PC-3 (cell line): ENCODE measurements at regions of chr3 and their contacts with region 1.

Region 1: GRCh38 chr3:190048932-190049441 is 71.7 kb downstream of the P3H2 start:
- DNase-seq: peak; percentile 59
- ATAC-seq: peak; percentile 65
- H3K4me3 ChIP-seq: peak overlapping the region; percentile 10; the same call in 1 of the 2 replicates
- H3K27ac ChIP-seq: no peak overlapping the region
- H3K4me1 ChIP-seq: peaks cover 14% of the 10 kb centered on the region
- H3K27me3 ChIP-seq: no peaks in the 10 kb centered on the region
- CTCF ChIP-seq: no peak

Region 2: GRCh38 chr3:190038050-190038933 is 10.7 kb before region 1 on chr3:
- CTCF ChIA-PET with region 1: no interaction called
- POLR2A ChIA-PET with region 1: no interaction called
- intact Hi-C with region 1: no loop called
- DNase-seq: peak; percentile 72
- ATAC-seq: peak; percentile 76
- H3K4me3 ChIP-seq: no peak overlapping the region
- H3K27ac ChIP-seq: no peak overlapping the region
- H3K4me1 ChIP-seq: peaks cover 9% of the 10 kb centered on the region; the same call in 1 of the 2 replicates
- H3K27me3 ChIP-seq: no peaks in the 10 kb centered on the region
- CTCF ChIP-seq: no peak

Region 3: DNA sequence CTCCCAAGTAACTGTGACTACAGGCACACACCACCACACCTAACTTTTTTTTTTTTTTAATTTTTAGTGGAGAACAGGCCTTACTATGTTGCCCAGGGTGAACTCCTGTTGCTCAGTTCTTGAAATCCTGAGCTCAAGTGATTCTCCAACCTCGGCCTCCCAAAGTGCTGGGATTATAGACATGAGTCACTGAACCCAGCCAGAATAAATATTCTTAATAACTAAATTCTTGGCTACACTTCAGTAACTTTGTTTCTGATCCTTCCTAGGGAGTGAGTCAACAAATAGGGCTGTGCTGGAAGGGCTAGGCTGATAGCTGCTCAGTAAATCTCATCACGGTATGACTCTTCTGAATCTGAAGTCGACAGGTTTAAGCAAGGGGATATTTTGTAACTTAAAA is 15.1 kb after region 1 on chr3:
- CTCF ChIA-PET with region 1: interaction called, 3 read pairs
- POLR2A ChIA-PET with region 1: interaction called, 18 read pairs
- intact Hi-C with region 1: no loop called
- DNase-seq: peak; percentile 96
- ATAC-seq: peak; percentile 99
- H3K4me3 ChIP-seq: no peak overlapping the region
- H3K27ac ChIP-seq: peak overlapping the region; percentile 36
- H3K4me1 ChIP-seq: peaks cover 18% of the 10 kb centered on the region
- H3K27me3 ChIP-seq: no peaks in the 10 kb centered on the region
- CTCF ChIP-seq: no peak

Region 4: DNA sequence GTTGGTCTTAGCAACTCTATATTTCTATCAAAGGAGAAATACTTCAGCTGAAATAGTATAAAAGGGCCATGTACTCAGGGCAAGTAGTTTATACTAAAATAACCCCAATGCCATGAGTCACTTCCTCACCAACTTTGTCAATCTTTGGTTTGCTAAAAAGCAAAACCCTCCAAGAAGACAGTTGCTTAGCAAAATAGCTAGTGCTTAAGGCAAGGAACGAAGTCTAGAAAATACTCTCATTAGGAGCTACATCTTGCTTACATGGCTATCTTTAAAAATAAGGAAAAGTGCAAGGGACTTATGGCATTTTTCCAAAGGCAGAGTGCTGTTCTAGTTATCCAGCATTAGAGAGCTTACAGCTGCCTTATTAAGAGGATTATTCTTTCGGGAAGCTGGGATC is 43.3 kb after region 1 on chr3:
- CTCF ChIA-PET with region 1: no interaction called
- POLR2A ChIA-PET with region 1: interaction called, 11 read pairs
- intact Hi-C with region 1: no loop called
- DNase-seq: peak; percentile 68
- ATAC-seq: peak; percentile 97
- H3K4me3 ChIP-seq: no peak overlapping the region
- H3K27ac ChIP-seq: no peak overlapping the region
- H3K4me1 ChIP-seq: peaks cover 10% of the 10 kb centered on the region
- H3K27me3 ChIP-seq: no peaks in the 10 kb centered on the region
- CTCF ChIP-seq: no peak